Activated B cell treated with CpG ODN at 0.5 μM for 24 hours (primary cell): ENCODE measurements at regions of chr3 and their contacts with region 1.

Region 1: GRCh38 chr3:50350527-50351322 is at the starts of genes CYB561D2 and NPRL2:
- DNase-seq: peak; percentile 99
- ATAC-seq: peak; percentile 89
- H3K4me3 Mint-ChIP-seq: peak within 1 kb of the TSS; percentile 97
- H3K27ac Mint-ChIP-seq: peak within 1 kb of the TSS; percentile 99
- H3K4me1 Mint-ChIP-seq: peaks cover 60% of the 10 kb centered on the region
- H3K27me3 Mint-ChIP-seq: no peaks in the 10 kb centered on the region
- CTCF ChIP-seq: no peak
- total RNA-seq, gene CYB561D2: 22.9 and 26.0 TPM in 2 replicates
- total RNA-seq, gene NPRL2: 23.6 and 26.4 TPM in 2 replicates

Region 2: GRCh38 chr3:50044976-50045375 is 305.7 kb before region 1 on chr3:
- CTCF ChIA-PET with region 1: no interaction called
- POLR2A ChIA-PET with region 1: no interaction called
- intact Hi-C with region 1: no loop called
- DNase-seq: no peak
- ATAC-seq: no peak
- H3K4me3 Mint-ChIP-seq: no peak overlapping the region
- H3K27ac Mint-ChIP-seq: no peak overlapping the region
- H3K4me1 Mint-ChIP-seq: no peaks in the 10 kb centered on the region
- H3K27me3 Mint-ChIP-seq: no peaks in the 10 kb centered on the region
- CTCF ChIP-seq: no peak

Region 3: DNA sequence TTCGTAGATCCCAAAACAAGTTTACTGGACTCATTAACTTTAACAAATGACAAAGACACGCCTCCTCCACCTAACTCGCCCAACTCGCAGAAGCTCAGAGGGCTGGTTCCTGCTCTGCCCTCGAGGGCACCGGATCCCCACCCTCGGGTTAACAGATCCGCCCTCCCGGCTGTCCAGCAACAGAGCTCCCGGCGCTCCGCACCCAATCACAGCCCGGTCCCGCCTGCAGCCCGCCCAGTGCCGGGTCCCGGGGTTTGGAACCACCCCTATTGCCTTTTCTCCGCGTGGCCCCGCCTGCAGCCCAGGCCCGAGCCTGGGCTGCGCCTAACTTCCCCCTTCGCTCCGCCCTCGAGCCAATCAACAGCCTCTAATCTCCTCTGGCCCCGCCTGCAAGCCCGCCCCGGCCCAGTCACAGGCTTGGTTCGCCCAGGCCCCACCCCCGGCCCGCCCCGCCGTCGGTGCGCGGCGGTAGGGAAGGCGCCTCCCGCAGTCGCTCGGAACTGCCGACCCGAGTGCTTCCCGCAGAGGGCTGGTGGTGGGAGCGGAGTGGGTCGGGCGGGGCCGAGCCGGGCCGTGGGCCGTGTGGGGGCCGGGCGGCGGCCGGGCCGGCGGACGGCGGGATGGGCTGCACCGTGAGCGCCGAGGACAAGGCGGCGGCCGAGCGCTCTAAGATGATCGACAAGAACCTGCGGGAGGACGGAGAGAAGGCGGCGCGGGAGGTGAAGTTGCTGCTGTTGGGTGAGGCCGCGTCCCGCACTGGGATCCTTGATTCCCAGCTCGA is 114.8 kb before region 1 on chr3 and contains the start of gene GNAI2:
- CTCF ChIA-PET with region 1: no interaction called
- POLR2A ChIA-PET with region 1: interaction called, 10 read pairs
- intact Hi-C with region 1: no loop called
- DNase-seq: peak; percentile 97
- ATAC-seq: peak; percentile 89
- H3K4me3 Mint-ChIP-seq: peak within 1 kb of the TSS; percentile 95
- H3K27ac Mint-ChIP-seq: peak within 1 kb of the TSS; percentile 91
- H3K4me1 Mint-ChIP-seq: peaks cover 54% of the 10 kb centered on the region
- H3K27me3 Mint-ChIP-seq: no peaks in the 10 kb centered on the region
- CTCF ChIP-seq: no peak
- total RNA-seq, gene GNAI2: 281 and 295 TPM in 2 replicates

Region 4: DNA sequence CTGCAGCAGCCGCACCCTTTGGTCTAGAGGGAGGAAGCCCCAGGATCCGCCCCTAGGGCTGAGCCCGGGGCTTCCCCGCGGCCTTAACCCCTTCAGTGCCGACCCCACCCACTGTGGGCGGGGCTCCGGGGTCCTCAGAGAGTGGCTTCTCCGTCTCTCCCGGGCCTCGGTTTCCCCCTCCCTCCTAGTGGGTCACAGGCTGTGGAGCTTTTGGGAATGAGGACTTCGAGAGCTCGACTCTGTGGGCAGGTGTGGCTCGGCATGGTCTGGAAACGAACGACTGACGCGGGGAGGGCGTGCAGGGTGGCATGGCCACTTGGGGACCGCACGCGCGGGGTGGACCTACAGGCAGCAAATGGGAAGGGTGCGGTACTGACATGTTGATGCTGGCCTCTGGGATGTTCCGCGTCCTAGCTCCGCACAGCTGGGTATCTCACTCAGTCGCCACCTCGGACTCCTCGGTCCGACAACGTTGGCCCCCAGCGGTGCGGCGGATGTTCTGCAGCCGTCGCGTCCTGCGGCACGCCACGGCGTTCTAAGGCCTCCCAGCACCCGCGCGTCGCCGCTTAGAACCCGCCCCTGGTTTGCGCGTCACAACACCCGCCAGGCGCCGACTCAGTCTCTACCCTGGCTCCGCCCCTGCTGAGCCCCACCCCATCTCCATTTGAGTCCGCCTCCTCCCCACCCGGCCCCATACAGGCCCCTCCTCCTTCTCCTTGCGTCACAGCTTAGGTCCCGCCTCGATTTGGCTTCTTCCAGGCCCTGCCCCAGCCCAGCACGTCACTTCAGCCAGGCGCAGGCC is 51.7 kb before region 1 on chr3 and contains the starts of genes HYAL3 and NAA80:
- CTCF ChIA-PET with region 1: interaction called, 4 read pairs
- POLR2A ChIA-PET with region 1: interaction called, 19 read pairs
- intact Hi-C with region 1: loop called (anchors 1 kb)
- DNase-seq: peak; percentile 98
- ATAC-seq: peak; percentile 89
- H3K4me3 Mint-ChIP-seq: peak within 1 kb of the TSS; percentile 98
- H3K27ac Mint-ChIP-seq: peak within 1 kb of the TSS; percentile 98
- H3K4me1 Mint-ChIP-seq: peaks cover 30% of the 10 kb centered on the region
- H3K27me3 Mint-ChIP-seq: no peaks in the 10 kb centered on the region
- CTCF ChIP-seq: no peak
- total RNA-seq, gene HYAL3: 2.0 and 2.5 TPM in 2 replicates
- total RNA-seq, gene NAA80: 23.9 and 24.8 TPM in 2 replicates

Region 5: DNA sequence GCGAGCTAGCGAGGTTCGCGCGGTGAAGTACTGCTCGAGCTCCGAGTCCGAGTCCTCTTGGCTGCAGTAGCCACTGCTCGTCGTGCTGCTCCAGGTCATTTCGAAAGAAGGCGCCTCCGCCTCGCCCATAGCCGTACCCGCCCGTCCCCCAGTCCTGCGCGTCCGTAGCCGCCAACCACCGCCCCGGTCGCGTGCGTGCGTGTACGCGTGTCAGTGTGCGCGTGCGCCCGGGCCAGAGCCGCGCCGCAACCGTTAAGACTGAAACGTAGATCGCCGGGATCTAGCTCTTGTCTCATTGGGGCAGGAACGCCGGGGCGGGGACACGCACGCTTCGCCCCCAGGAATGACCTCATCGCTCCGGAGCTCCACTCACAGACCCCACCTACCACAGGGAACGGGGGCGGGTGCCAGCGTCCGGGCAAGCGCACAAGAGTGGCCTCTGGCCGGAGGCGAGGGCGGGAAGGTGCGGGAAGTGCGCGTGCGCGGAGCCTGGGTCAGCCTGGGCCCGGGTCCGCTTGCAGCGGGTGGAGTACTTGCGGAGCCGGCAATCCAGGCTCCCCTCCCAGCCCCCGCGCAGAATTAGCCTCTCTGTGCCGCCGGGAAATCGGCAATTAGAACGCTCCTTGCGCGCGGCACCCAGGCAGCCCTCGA is 13.4 kb before region 1 on chr3:
- CTCF ChIA-PET with region 1: interaction called, 16 read pairs
- POLR2A ChIA-PET with region 1: interaction called, 195 read pairs
- intact Hi-C with region 1: loop called (anchors 1 kb)
- DNase-seq: peak; percentile 90
- ATAC-seq: peak; percentile 83
- H3K4me3 Mint-ChIP-seq: peak overlapping the region; percentile 95
- H3K27ac Mint-ChIP-seq: peak overlapping the region; percentile 98
- H3K4me1 Mint-ChIP-seq: peaks cover 66% of the 10 kb centered on the region
- H3K27me3 Mint-ChIP-seq: no peaks in the 10 kb centered on the region
- CTCF ChIP-seq: no peak

Region 6: DNA sequence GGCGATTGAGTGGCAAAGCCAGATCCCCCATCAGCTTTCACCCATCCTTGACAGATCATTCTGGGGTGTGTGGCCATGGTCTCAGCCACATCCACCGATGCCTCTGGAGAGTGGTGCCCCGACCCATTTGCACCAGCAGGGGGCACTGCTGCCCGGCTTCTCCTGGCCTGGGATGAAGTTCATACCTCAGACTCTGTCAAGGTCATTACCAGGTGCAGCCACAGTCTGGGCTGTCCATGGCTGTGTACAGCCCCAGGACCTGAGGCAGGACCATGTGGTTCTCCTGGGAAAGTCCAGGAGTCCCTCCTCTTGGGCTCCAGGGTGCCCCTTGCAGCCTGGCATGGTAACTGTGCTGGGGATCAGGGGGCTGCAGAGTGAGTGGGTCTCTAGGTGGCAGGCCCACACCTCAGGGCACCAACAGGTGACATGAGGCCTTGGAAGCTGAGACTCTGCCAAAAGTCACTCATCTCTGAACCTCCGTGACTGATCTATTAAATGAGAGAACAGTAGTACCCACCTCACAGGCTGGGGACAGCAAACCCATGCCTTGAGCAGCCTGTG is 85.5 kb after region 1 on chr3:
- CTCF ChIA-PET with region 1: no interaction called
- POLR2A ChIA-PET with region 1: no interaction called
- intact Hi-C with region 1: loop called (anchors 1 kb)
- DNase-seq: peak; percentile 64
- ATAC-seq: peak; percentile 86
- H3K4me3 Mint-ChIP-seq: no peak overlapping the region
- H3K27ac Mint-ChIP-seq: no peak overlapping the region
- H3K4me1 Mint-ChIP-seq: no peaks in the 10 kb centered on the region
- H3K27me3 Mint-ChIP-seq: peaks cover 4% of the 10 kb centered on the region
- CTCF ChIP-seq: no peak